ENCODE measurements at regions of chr5 and their contacts with region 1.

Region 1: GRCh38 chr5:112757468-112758208 is 20.0 kb downstream of the APC start:
- DNase-seq: peak in 2 of 5 donors; percentile 47 to 49
- H3K4me3 ChIP-seq: no peak overlapping the region
- H3K4me3 Mint-ChIP-seq: peak overlapping the region in 2 of 7 donors; percentile 27 to 58
- H3K27ac ChIP-seq: no peak overlapping the region
- H3K27ac Mint-ChIP-seq: peak overlapping the region in 6 of 8 donors; percentile 38 to 88 (median 76)
- H3K4me1 ChIP-seq: peaks cover 5% of the 10 kb centered on the region
- H3K4me1 Mint-ChIP-seq: peaks cover 8 to 18% (median 14%) of the 10 kb centered on the region in 3 donors
- H3K27me3 ChIP-seq: no peaks in the 10 kb centered on the region
- H3K27me3 Mint-ChIP-seq: no peaks in the 10 kb centered on the region

Region 2: DNA sequence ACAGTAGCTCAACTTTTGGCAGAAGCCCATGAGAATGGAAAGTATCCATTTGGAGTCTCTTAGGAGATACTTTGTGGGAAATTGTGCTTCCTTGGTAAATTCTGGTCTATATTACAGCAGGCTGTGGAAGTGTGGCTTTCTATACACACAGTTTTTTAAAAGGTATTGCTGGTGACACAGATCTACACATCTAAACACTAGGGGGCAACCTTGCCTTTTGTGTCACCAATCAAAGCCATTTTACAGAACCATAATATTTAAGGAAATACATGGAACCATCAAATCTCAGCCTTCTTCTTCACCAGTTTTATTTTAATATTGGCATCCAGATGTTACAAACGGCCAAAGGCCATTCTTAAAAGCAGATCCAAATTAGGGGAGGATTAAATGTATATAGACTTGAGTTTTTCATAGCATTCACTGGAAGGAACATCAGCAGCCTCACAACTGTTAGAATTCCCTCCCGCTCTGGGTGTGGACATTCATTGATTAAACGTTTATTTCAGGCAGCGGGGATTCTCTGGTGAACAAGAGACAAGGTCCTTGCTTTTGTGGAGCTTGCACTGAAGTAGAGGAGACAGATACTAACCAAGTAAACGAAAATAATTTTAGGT is 206.1 kb before region 1 on chr5:
- CTCF ChIA-PET with region 1: interaction called, 59 read pairs
- POLR2A ChIA-PET with region 1: no interaction called
- DNase-seq: peak in 3 of 5 donors; percentile 8 to 47 (median 37)
- H3K4me3 ChIP-seq: no peak overlapping the region
- H3K4me3 Mint-ChIP-seq: no peak overlapping the region
- H3K27ac ChIP-seq: no peak overlapping the region
- H3K27ac Mint-ChIP-seq: no peak overlapping the region
- H3K4me1 ChIP-seq: no peaks in the 10 kb centered on the region
- H3K4me1 Mint-ChIP-seq: peaks cover 0 to 10% (median 0%) of the 10 kb centered on the region in 3 donors
- H3K27me3 ChIP-seq: no peaks in the 10 kb centered on the region
- H3K27me3 Mint-ChIP-seq: peaks cover 3 to 8% of the 10 kb centered on the region in 2 donors

Region 3: GRCh38 chr5:112689155-112689909 is 68.3 kb before region 1 on chr5:
- CTCF ChIA-PET with region 1: interaction called, 11 read pairs
- POLR2A ChIA-PET with region 1: no interaction called
- DNase-seq: no peak
- H3K4me3 ChIP-seq: no peak overlapping the region
- H3K4me3 Mint-ChIP-seq: no peak overlapping the region
- H3K27ac ChIP-seq: no peak overlapping the region
- H3K27ac Mint-ChIP-seq: no peak overlapping the region
- H3K4me1 ChIP-seq: no peaks in the 10 kb centered on the region
- H3K4me1 Mint-ChIP-seq: no peaks in the 10 kb centered on the region
- H3K27me3 ChIP-seq: no peaks in the 10 kb centered on the region
- H3K27me3 Mint-ChIP-seq: peaks cover 21 to 46% of the 10 kb centered on the region in 2 donors

Measured in CD8-positive, alpha-beta memory T cell (primary cell).